GM12878 (cell line): ENCODE measurements at regions of chr14 and their contacts with region 1.

Region 1: DNA sequence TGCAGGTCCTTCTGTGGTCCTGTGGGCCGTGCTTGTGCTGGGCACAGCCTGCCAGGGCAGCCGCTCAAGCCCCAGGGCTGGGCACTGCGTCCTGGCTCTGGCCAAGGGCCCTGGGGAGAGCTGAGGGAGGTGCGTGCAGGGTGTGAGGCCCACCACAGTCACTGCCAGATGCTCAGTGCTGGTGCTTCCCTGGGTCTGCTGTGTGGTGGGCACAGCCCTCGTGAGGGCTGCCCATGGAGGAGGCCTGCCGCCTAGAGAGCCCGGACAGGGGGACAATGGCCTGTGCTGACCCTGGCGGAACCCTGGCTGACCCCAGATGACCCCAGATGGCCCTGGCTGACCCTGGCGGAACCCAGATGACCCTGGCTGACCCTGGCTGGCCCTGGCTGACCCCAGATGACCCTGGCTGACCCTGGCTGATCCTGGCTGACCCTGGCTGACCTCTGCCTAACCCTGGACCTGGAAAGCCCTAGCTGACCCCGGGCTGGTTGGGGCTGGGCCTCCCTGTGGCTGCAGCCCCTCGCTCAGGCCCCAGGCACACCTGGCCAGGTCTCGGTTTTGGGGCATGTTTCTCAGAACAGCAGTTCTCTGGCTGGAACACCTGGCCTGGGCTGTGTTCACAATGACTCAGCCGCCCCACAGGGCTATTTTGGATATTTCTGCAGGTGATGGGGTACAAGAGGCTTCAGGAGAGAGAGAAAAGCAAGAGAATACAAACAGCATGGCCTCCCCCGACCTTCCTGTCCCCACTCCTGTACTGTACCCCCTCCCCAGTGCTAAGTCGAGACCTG is 55.4 kb downstream of the TMEM121 start:
- DNase-seq: peak; percentile 71
- ATAC-seq: peak; percentile 68
- H3K4me3 ChIP-seq: no peak overlapping the region
- H3K27ac ChIP-seq: peak overlapping the region; percentile 99
- H3K4me1 ChIP-seq: peaks cover 40% of the 10 kb centered on the region
- H3K27me3 ChIP-seq: no peaks in the 10 kb centered on the region
- CTCF ChIP-seq: no peak
- EP300 ChIP-seq: peak; percentile 74 to 94
- POLR2A ChIP-seq: no peak; the same call in 1 of the 2 replicates
- RAD21 ChIP-seq: no peak

Region 2: DNA sequence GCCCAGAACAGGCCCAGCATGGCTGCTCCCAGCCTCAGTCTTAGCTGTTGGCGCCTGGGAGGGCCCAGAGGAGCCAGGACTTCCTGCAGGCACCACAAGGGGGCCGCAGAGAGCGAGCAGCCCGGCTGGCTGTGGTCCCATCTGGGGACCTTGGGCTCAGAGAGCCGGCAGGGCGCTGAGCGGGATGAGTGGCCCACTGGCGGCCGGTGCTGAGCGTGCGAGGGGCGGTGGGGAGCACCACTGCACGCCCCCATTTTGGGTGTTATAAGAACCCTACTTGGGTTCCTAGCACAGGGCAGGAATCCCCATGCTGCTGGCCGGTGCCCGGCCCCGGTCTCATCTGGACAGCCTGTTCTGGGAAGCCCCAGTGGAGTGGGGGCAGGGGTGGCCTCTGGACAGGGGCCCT is 133.0 kb before region 1 on chr14:
- CTCF ChIA-PET with region 1: no interaction called
- POLR2A ChIA-PET with region 1: no interaction called
- RAD21 ChIA-PET with region 1: no interaction called
- SMC1A ChIA-PET with region 1: no interaction called
- in situ Hi-C with region 1: no loop called
- intact Hi-C with region 1: no loop called
- DNase-seq: no peak
- ATAC-seq: peak; percentile 98
- H3K4me3 ChIP-seq: no peak overlapping the region
- H3K27ac ChIP-seq: no peak overlapping the region
- H3K4me1 ChIP-seq: no peaks in the 10 kb centered on the region
- H3K27me3 ChIP-seq: no peaks in the 10 kb centered on the region
- CTCF ChIP-seq: peak; percentile 56 to 80 (median 62)
- EP300 ChIP-seq: no peak
- POLR2A ChIP-seq: no peak
- RAD21 ChIP-seq: peak; percentile 49

Region 3: GRCh38 chr14:105617201-105617777 is 35.5 kb after region 1 on chr14:
- CTCF ChIA-PET with region 1: no interaction called
- POLR2A ChIA-PET with region 1: no interaction called
- RAD21 ChIA-PET with region 1: no interaction called
- SMC1A ChIA-PET with region 1: no interaction called
- in situ Hi-C with region 1: no loop called
- intact Hi-C with region 1: no loop called
- DNase-seq: peak; percentile 13
- ATAC-seq: no peak
- H3K4me3 ChIP-seq: no peak overlapping the region
- H3K27ac ChIP-seq: no peak overlapping the region
- H3K4me1 ChIP-seq: no peaks in the 10 kb centered on the region; the same call in 1 of the 2 replicates
- H3K27me3 ChIP-seq: no peaks in the 10 kb centered on the region
- CTCF ChIP-seq: no peak
- EP300 ChIP-seq: no peak
- POLR2A ChIP-seq: no peak
- RAD21 ChIP-seq: no peak

Region 4: DNA sequence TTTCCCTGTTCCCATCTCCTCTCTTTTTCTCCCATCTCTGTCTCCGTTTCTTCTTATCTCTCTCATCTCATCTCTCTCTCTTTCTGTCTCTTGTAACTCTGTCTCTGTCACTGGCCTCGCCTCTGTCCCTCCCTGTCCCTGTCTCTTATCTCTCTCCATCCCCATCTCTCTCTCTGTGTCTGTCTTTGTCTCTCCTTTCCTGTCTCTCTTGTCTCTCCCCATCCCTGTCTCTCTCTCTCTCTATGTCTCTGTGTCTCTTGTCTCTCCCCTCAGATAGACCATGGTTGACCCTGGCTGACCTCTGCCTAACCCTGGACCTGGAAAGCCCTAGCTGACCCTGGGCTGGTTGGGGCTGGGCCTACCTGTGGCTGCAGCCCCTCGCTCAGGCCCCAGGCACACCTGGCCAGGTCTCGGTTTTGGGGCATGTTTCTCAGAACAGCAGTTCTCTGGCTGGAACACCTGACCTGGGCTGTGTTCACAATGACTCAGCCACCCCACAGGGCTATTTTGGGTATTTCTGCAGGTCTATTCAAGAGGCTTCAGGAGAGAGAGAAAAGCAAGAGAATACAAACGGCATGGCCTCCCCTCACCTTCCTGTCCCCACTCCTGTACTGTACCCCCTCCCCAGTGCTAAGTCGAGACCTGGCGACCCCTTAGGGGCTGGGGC is 119.0 kb after region 1 on chr14:
- CTCF ChIA-PET with region 1: no interaction called
- POLR2A ChIA-PET with region 1: no interaction called
- RAD21 ChIA-PET with region 1: no interaction called
- SMC1A ChIA-PET with region 1: no interaction called
- in situ Hi-C with region 1: loop called (anchors 10 kb)
- intact Hi-C with region 1: no loop called
- DNase-seq: peak; percentile 77
- ATAC-seq: peak; percentile 63
- H3K4me3 ChIP-seq: peak overlapping the region; percentile 5; the same call in 1 of the 2 replicates
- H3K27ac ChIP-seq: peak overlapping the region; percentile 98
- H3K4me1 ChIP-seq: peaks cover 41% of the 10 kb centered on the region
- H3K27me3 ChIP-seq: no peaks in the 10 kb centered on the region
- CTCF ChIP-seq: no peak
- EP300 ChIP-seq: peak; percentile 46 to 82; a peak in 1 of 4 replicates
- POLR2A ChIP-seq: peak; percentile 67
- RAD21 ChIP-seq: 0 out of 2 replicates have a peak, but pooled peaks have one; percentile 1